ENCODE measurements at regions of chr10 and their contacts with region 1.

Region 1: GRCh38 chr10:13299437-13300287 is at the start of gene PHYH:
- DNase-seq: peak; percentile 85
- ATAC-seq: peak; percentile 63
- H3K4me3 Mint-ChIP-seq: peak within 1 kb of the TSS; percentile 88
- H3K27ac Mint-ChIP-seq: peak within 1 kb of the TSS; percentile 90
- H3K4me1 Mint-ChIP-seq: peaks cover 19% of the 10 kb centered on the region
- H3K27me3 Mint-ChIP-seq: no peaks in the 10 kb centered on the region
- total RNA-seq, gene PHYH: 15.1 to 16.0 TPM

Region 2: GRCh38 chr10:13099666-13100348 is 199.9 kb before region 1 on chr10 and contains the start of gene OPTN:
- POLR2A ChIA-PET with region 1: interaction called, 15 read pairs
- DNase-seq: peak; percentile 81
- ATAC-seq: peak; percentile 74
- H3K4me3 Mint-ChIP-seq: peak within 1 kb of the TSS; percentile 97
- H3K27ac Mint-ChIP-seq: peak within 1 kb of the TSS; percentile 93
- H3K4me1 Mint-ChIP-seq: peaks cover 25% of the 10 kb centered on the region
- H3K27me3 Mint-ChIP-seq: no peaks in the 10 kb centered on the region
- total RNA-seq, gene OPTN: 95.6 to 98.2 TPM

Region 3: GRCh38 chr10:13160934-13161856 is 138.5 kb before region 1 on chr10 and contains the start of gene MCM10:
- POLR2A ChIA-PET with region 1: interaction called, 27 read pairs
- DNase-seq: peak; percentile 95
- ATAC-seq: peak; percentile 100
- H3K4me3 Mint-ChIP-seq: peak within 1 kb of the TSS; percentile 92
- H3K27ac Mint-ChIP-seq: peak within 1 kb of the TSS; percentile 78
- H3K4me1 Mint-ChIP-seq: peaks cover 33% of the 10 kb centered on the region
- H3K27me3 Mint-ChIP-seq: no peaks in the 10 kb centered on the region
- total RNA-seq, gene MCM10: 40.2 to 45.0 TPM

Region 4: GRCh38 chr10:13348216-13349017 is 48.8 kb after region 1 on chr10 and contains the start of gene SEPHS1:
- POLR2A ChIA-PET with region 1: interaction called, 68 read pairs
- DNase-seq: peak; percentile 83
- ATAC-seq: peak; percentile 70
- H3K4me3 Mint-ChIP-seq: peak within 1 kb of the TSS; percentile 90
- H3K27ac Mint-ChIP-seq: peak within 1 kb of the TSS; percentile 93
- H3K4me1 Mint-ChIP-seq: peaks cover 45% of the 10 kb centered on the region
- H3K27me3 Mint-ChIP-seq: peaks cover 2% of the 10 kb centered on the region
- total RNA-seq, gene SEPHS1: 40.8 to 43.8 TPM

Measured in activated naive CD8-positive, alpha-beta T cell treated with anti-CD3 and anti-CD28 coated beads, Interleukin-2, amount 10 ng/mL, durations not matched to agents 7 days and 5 days (primary cell).